CD4-positive, alpha-beta T cell (primary cell): ENCODE measurements at regions of chr11 and their contacts with region 1.

Region 1: DNA sequence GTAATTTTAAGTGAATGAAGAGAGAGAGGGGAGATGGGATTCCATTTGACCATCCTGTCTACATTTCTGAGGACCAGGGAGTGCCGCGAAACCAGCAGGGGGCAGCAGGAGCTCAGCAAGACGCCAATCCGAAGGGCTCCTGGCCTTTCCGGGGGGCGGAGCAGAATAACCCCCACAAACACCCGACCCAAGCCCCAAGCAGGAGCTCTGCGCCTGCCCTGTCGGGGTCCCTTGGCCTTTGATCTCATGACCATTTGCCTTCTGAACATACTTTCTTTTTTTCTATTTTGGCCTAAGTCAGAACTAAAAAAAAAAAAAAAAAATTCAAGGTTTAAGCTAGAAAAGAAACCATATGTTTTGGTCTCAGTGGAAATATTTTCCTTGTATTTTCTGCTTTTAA is 21.9 kb upstream of the SCN2B start:
- DNase-seq: peak; percentile 73 to 90 (median 80)
- ATAC-seq: peak; percentile 38
- H3K4me3 ChIP-seq: no peak overlapping the region
- H3K4me3 Mint-ChIP-seq: no peak overlapping the region
- H3K27ac ChIP-seq: peak overlapping the region; percentile 3
- H3K27ac Mint-ChIP-seq: peak overlapping the region; percentile 52
- H3K4me1 ChIP-seq: peaks cover 43% of the 10 kb centered on the region
- H3K4me1 Mint-ChIP-seq: peaks cover 11% of the 10 kb centered on the region
- H3K27me3 ChIP-seq: no peaks in the 10 kb centered on the region
- H3K27me3 Mint-ChIP-seq: no peaks in the 10 kb centered on the region
- CTCF ChIP-seq: peak; percentile 92

Region 2: DNA sequence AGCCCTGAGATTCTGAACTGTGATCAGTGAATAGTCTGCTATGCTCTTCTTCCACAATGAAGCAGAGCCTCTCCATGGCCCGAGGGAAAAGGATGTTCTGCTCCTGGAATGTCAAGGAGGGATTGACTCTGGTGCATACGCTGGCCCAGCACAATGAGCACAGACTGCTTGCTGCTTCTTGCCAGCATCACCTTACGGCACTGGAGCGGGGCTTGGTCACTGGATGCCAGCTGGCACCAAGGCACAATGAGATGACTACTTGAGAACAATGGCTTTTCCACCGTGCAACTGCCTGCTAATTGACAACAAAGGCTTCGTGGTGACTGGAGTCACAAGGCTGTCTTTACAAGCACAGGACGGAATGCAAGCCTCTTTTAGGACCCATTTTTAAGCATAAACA is 540.6 kb before region 1 on chr11:
- CTCF ChIA-PET with region 1: no interaction called
- POLR2A ChIA-PET with region 1: no interaction called
- intact Hi-C with region 1: no loop called
- DNase-seq: no peak
- ATAC-seq: no peak
- H3K4me3 ChIP-seq: no peak overlapping the region
- H3K4me3 Mint-ChIP-seq: no peak overlapping the region
- H3K27ac ChIP-seq: no peak overlapping the region
- H3K27ac Mint-ChIP-seq: no peak overlapping the region
- H3K4me1 ChIP-seq: no peaks in the 10 kb centered on the region
- H3K4me1 Mint-ChIP-seq: no peaks in the 10 kb centered on the region
- H3K27me3 ChIP-seq: no peaks in the 10 kb centered on the region
- H3K27me3 Mint-ChIP-seq: no peaks in the 10 kb centered on the region
- CTCF ChIP-seq: no peak

Region 3: GRCh38 chr11:118240999-118241768 is 42.8 kb after region 1 on chr11:
- CTCF ChIA-PET with region 1: interaction called, 19 read pairs
- POLR2A ChIA-PET with region 1: interaction called, 3 read pairs
- intact Hi-C with region 1: loop called (anchors 5 kb)
- DNase-seq: peak in 11 of 14 experiments; percentile 22 to 90 (median 55)
- ATAC-seq: peak; percentile 96
- H3K4me3 ChIP-seq: peak overlapping the region; percentile 21
- H3K4me3 Mint-ChIP-seq: peak overlapping the region; percentile 71
- H3K27ac ChIP-seq: peak overlapping the region; percentile 42 to 79
- H3K27ac Mint-ChIP-seq: peak overlapping the region; percentile 89
- H3K4me1 ChIP-seq: peaks cover 49% of the 10 kb centered on the region
- H3K4me1 Mint-ChIP-seq: peaks cover 70% of the 10 kb centered on the region
- H3K27me3 ChIP-seq: no peaks in the 10 kb centered on the region
- H3K27me3 Mint-ChIP-seq: no peaks in the 10 kb centered on the region
- CTCF ChIP-seq: no peak

Region 4: GRCh38 chr11:118263695-118264567 is 65.6 kb after region 1 on chr11 and contains the start of gene MPZL2:
- CTCF ChIA-PET with region 1: interaction called, 14 read pairs
- POLR2A ChIA-PET with region 1: interaction called, 4 read pairs
- intact Hi-C with region 1: no loop called
- DNase-seq: peak in 7 of 14 experiments; percentile 12 to 66 (median 30)
- ATAC-seq: peak; percentile 77
- H3K4me3 ChIP-seq: peak within 1 kb of the TSS; percentile 40
- H3K4me3 Mint-ChIP-seq: peak within 1 kb of the TSS; percentile 90
- H3K27ac ChIP-seq: no peak within 1 kb of the TSS
- H3K27ac Mint-ChIP-seq: peak within 1 kb of the TSS; percentile 86
- H3K4me1 ChIP-seq: peaks cover 17% of the 10 kb centered on the region
- H3K4me1 Mint-ChIP-seq: peaks cover 48% of the 10 kb centered on the region
- H3K27me3 ChIP-seq: no peaks in the 10 kb centered on the region
- H3K27me3 Mint-ChIP-seq: no peaks in the 10 kb centered on the region
- CTCF ChIP-seq: no peak
- total RNA-seq, gene MPZL2: 0.95 to 1.8 TPM

Region 5: DNA sequence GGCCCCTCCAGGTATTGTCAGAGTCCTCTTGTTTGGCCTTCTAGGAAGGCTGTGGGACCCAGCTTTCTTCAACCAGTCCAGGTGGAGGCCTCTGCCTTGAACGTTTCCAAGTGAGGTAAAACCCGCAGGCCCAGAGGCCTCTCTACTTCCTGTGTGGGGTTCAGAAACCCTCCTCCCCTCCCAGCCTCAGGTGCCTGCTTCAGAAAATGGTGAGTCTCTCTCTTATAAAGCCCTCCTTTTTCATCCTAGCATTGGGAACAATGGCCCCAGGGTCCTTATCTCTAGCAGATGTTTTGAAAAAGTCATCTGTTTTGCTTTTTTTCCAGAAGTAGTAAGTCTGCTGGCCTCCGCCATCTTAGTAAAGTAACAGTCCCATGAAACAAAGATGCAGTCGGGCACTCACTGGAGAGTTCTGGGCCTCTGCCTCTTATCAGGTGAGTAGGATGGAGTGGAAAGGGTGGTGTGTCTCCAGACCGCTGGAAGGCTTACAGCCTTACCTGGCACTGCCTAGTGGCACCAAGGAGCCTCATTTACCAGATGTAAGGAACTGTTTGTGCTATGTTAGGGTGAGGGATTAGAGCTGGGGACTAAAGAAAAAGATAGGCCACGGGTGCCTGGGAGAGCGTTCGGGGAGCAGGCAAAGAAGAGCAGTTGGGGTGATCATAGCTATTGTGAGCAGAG is 106.3 kb after region 1 on chr11 and contains the start of gene CD3E:
- CTCF ChIA-PET with region 1: interaction called, 14 read pairs
- POLR2A ChIA-PET with region 1: interaction called, 13 read pairs
- intact Hi-C with region 1: no loop called
- DNase-seq: peak; percentile 51 to 84 (median 64)
- ATAC-seq: peak; percentile 73
- H3K4me3 ChIP-seq: peak within 1 kb of the TSS; percentile 68
- H3K4me3 Mint-ChIP-seq: peak within 1 kb of the TSS; percentile 96
- H3K27ac ChIP-seq: peak within 1 kb of the TSS; percentile 81 to 88
- H3K27ac Mint-ChIP-seq: peak within 1 kb of the TSS; percentile 100
- H3K4me1 ChIP-seq: peaks cover 64% of the 10 kb centered on the region
- H3K4me1 Mint-ChIP-seq: peaks cover 87% of the 10 kb centered on the region
- H3K27me3 ChIP-seq: no peaks in the 10 kb centered on the region
- H3K27me3 Mint-ChIP-seq: no peaks in the 10 kb centered on the region
- CTCF ChIP-seq: no peak
- total RNA-seq, gene CD3E: 483 to 515 TPM

Region 6: DNA sequence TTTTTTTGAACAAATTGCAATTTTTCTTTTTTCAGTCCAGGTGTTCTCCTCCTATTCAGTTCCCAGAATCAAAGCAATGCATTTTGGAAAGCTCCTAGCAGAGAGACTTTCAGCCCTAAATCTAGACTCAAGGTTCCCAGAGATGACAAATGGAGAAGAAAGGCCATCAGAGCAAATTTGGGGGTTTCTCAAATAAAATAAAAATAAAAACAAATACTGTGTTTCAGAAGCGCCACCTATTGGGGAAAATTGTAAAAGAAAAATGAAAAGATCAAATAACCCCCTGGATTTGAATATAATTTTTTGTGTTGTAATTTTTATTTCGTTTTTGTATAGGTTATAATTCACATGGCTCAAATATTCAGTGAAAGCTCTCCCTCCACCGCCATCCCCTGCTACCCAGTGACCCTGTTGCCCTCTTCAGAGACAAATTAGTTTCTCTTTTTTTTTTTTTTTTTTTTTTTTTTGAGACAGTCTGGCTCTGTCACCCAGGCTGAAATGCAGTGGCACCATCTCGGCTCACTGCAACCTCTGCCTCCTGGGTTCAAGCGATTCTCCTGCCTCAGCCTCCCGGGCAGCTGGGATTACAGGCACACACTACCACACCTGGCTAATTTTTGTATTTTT is 154.8 kb after region 1 on chr11:
- CTCF ChIA-PET with region 1: interaction called, 31 read pairs
- POLR2A ChIA-PET with region 1: no interaction called
- intact Hi-C with region 1: loop called (anchors 2 kb)
- DNase-seq: peak in 3 of 14 experiments; percentile 72 to 77 (median 75)
- ATAC-seq: peak; percentile 54
- H3K4me3 ChIP-seq: no peak overlapping the region
- H3K4me3 Mint-ChIP-seq: no peak overlapping the region
- H3K27ac ChIP-seq: peak overlapping the region; percentile 7 to 50
- H3K27ac Mint-ChIP-seq: peak overlapping the region; percentile 98
- H3K4me1 ChIP-seq: peaks cover 17% of the 10 kb centered on the region
- H3K4me1 Mint-ChIP-seq: peaks cover 51% of the 10 kb centered on the region
- H3K27me3 ChIP-seq: no peaks in the 10 kb centered on the region
- H3K27me3 Mint-ChIP-seq: no peaks in the 10 kb centered on the region
- CTCF ChIP-seq: peak; percentile 77